ENCODE measurements at regions of chr20 and their contacts with region 1.

Region 1: DNA sequence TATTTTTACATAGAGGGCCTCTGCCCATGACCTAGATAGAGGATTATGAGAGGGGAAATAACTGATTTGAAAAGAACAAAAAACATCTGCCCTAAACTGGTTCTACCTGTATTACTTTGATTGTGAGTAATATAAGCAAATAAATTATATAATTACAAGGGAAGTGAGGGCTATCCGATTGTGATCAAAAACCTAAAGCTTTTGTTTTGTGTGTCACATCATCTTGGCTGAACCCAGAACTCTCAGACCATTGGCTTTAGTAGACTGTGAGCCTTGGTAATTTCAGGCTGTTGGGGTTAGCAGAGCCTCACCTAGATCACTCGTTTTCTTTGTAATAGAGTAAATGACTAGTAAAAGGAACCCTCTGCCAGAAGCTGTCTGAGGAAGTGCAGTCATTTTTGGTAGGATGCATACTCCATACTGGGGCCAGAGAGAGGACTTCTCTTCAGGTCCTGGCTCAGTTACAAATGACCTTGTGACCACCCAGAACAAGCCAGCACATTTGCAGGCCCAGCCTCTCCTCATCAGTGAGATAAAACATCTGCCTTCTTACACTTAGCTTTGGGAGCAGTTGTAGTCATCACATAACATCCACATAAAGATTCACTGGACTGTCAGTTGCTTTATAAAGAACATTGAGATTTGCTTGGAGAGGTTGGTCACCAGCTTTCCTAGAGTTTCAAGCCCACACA is 13.5 kb downstream of the STK35 start:
- DNase-seq: no peak
- ATAC-seq: no peak
- H3K4me3 Mint-ChIP-seq: peak overlapping the region in 5 of 10 donors; percentile 5 to 43 (median 18)
- H3K27ac Mint-ChIP-seq: peak overlapping the region in 4 of 10 donors; percentile 10 to 81 (median 18)
- H3K4me1 Mint-ChIP-seq: peaks cover 41 to 90% (median 78%) of the 10 kb centered on the region in 4 donors
- H3K27me3 Mint-ChIP-seq: no peaks in the 10 kb centered on the region

Region 2: DNA sequence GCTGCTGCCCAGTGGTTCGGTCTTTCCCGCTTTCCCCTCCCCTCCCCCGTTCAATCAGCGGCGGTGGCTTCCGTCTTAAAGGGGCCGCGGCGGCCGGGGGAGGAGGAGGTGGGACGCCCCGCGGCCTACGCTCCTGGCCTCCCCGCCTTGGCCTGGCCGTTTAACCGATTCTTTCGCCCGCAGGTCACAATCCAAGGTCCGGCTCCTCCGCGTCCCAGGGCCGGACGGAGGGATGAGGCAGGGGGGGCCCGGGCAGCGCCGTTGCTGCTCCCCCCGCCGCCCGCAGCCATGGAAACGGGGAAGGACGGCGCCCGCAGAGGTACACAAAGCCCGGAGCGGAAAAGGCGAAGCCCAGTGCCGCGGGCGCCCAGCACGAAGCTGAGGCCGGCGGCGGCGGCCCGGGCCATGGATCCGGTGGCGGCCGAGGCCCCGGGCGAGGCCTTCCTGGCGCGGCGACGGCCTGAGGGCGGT is 12.5 kb before region 1 on chr20:
- POLR2A ChIA-PET with region 1: interaction called, 10 read pairs
- DNase-seq: peak; percentile 72 to 97 (median 84)
- ATAC-seq: peak; percentile 61 to 71
- H3K4me3 Mint-ChIP-seq: peak overlapping the region; percentile 90 to 98 (median 95)
- H3K27ac Mint-ChIP-seq: peak overlapping the region; percentile 98 to 100 (median 100)
- H3K4me1 Mint-ChIP-seq: peaks cover 29 to 59% (median 53%) of the 10 kb centered on the region in 4 donors
- H3K27me3 Mint-ChIP-seq: peaks cover 0 to 2% (median 0%) of the 10 kb centered on the region in 5 donors